GM12878 (cell line): ENCODE measurements at regions of chr6 and their contacts with region 1.

Region 1: DNA sequence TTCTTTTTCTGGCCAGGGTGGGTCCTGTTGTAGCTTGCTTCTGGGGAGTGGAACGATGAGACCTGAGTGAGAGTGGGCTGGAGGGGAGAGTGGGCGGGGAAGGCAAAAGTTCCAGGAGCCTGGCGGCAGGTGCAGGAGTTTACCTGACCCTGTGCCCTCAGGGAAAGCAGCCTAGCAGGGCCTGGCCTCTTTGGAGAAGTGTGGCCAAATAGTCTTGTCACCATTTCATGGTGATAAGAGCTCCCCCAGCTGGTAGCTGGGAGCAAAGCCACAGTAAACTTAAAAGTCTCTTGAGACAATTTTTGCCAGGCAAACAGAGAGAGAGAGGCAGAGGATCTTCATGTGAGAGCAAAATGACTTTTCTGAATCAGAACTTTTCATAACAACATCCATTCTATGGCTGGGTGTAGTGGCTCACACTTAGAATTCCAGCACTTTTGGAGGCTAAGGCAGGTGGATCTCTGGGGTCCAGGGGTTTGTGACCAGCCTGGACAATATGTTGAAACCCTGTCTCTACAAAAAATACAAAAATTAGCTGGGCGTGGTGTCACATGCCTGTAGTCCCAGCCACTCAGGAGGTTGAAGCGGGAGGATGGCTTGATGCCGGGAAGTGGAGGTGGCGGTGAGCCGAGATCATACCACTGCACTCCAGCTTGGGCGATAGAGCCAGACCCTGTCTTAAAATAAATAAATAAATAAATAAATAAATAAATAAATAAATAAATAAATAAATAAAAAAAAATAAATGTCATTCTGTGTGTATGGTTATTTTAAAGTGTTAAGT is 161.8 kb upstream of the SCGN start:
- DNase-seq: peak; percentile 42
- ATAC-seq: peak; percentile 99
- H3K4me3 ChIP-seq: no peak overlapping the region
- H3K27ac ChIP-seq: no peak overlapping the region; the same call in 1 of the 2 replicates
- H3K4me1 ChIP-seq: no peaks in the 10 kb centered on the region
- H3K27me3 ChIP-seq: no peaks in the 10 kb centered on the region
- CTCF ChIP-seq: peak; percentile 84 to 89 (median 88)
- EP300 ChIP-seq: no peak
- POLR2A ChIP-seq: no peak
- RAD21 ChIP-seq: peak; percentile 97

Region 2: GRCh38 chr6:25205629-25206028 is 284.6 kb before region 1 on chr6:
- CTCF ChIA-PET with region 1: no interaction called
- POLR2A ChIA-PET with region 1: no interaction called
- RAD21 ChIA-PET with region 1: no interaction called
- SMC1A ChIA-PET with region 1: no interaction called
- in situ Hi-C with region 1: no loop called
- intact Hi-C with region 1: no loop called
- DNase-seq: no peak
- ATAC-seq: no peak
- H3K4me3 ChIP-seq: no peak overlapping the region
- H3K27ac ChIP-seq: no peak overlapping the region
- H3K4me1 ChIP-seq: no peaks in the 10 kb centered on the region
- H3K27me3 ChIP-seq: no peaks in the 10 kb centered on the region; a peak in 1 of 4 replicates
- CTCF ChIP-seq: no peak
- EP300 ChIP-seq: no peak
- POLR2A ChIP-seq: no peak
- RAD21 ChIP-seq: no peak

Region 3: DNA sequence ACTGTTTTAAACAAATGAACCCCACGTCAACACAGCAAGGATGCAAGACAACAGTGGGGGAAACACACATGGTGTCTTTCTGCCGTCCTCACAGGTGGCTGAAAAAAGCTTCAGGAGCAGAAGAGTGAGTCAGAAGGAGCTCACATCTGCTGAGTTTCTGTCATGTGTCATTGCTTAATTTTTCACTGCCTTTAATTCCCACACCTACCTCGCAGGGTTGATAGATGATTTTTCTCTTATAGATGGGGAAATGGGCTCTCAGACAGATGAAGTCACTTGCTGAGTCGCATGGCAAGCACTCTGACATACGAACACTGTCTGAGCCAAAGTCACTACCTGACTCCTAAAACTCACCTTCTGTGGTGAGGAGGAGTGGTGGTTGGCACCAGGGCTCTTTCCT is 239.3 kb before region 1 on chr6:
- CTCF ChIA-PET with region 1: interaction called, 10 read pairs
- POLR2A ChIA-PET with region 1: no interaction called
- RAD21 ChIA-PET with region 1: no interaction called
- SMC1A ChIA-PET with region 1: interaction called, 4 read pairs
- in situ Hi-C with region 1: no loop called
- intact Hi-C with region 1: no loop called
- DNase-seq: peak; percentile 38
- ATAC-seq: peak; percentile 74
- H3K4me3 ChIP-seq: no peak overlapping the region
- H3K27ac ChIP-seq: no peak overlapping the region
- H3K4me1 ChIP-seq: no peaks in the 10 kb centered on the region
- H3K27me3 ChIP-seq: no peaks in the 10 kb centered on the region
- CTCF ChIP-seq: no peak
- EP300 ChIP-seq: no peak
- POLR2A ChIP-seq: no peak
- RAD21 ChIP-seq: no peak

Region 4: GRCh38 chr6:25278914-25279747 is 211.1 kb before region 1 on chr6 and contains the start of gene CARMIL1:
- CTCF ChIA-PET with region 1: interaction called, 362 read pairs
- POLR2A ChIA-PET with region 1: interaction called, 9 read pairs
- RAD21 ChIA-PET with region 1: interaction called, 219 read pairs
- SMC1A ChIA-PET with region 1: interaction called, 105 read pairs
- in situ Hi-C with region 1: loop called (anchors 5 kb)
- intact Hi-C with region 1: loop called (anchors 1 kb)
- DNase-seq: no peak
- ATAC-seq: peak; percentile 88
- H3K4me3 ChIP-seq: peak within 1 kb of the TSS; percentile 92
- H3K27ac ChIP-seq: peak within 1 kb of the TSS; percentile 50
- H3K4me1 ChIP-seq: 0 out of 2 replicates have a peak, but pooled peaks cover 5% of the 10 kb centered on the region
- H3K27me3 ChIP-seq: no peaks in the 10 kb centered on the region
- CTCF ChIP-seq: peak; percentile 64 to 81 (median 75)
- EP300 ChIP-seq: no peak
- POLR2A ChIP-seq: no peak
- RAD21 ChIP-seq: peak; percentile 79
- polyA plus RNA-seq, gene CARMIL1: 9.4 to 11.3 TPM

Region 5: GRCh38 chr6:25342802-25343201 is 147.4 kb before region 1 on chr6:
- CTCF ChIA-PET with region 1: interaction called, 8 read pairs
- POLR2A ChIA-PET with region 1: interaction called, 3 read pairs
- RAD21 ChIA-PET with region 1: interaction called, 11 read pairs
- SMC1A ChIA-PET with region 1: interaction called, 5 read pairs
- in situ Hi-C with region 1: no loop called
- intact Hi-C with region 1: no loop called
- DNase-seq: no peak
- ATAC-seq: no peak
- H3K4me3 ChIP-seq: no peak overlapping the region
- H3K27ac ChIP-seq: no peak overlapping the region
- H3K4me1 ChIP-seq: peaks cover 9% of the 10 kb centered on the region
- H3K27me3 ChIP-seq: 0 out of 4 replicates have a peak, but pooled peaks cover 0 to 2% of the 10 kb centered on the region in 2 experiments
- CTCF ChIP-seq: no peak
- EP300 ChIP-seq: no peak
- POLR2A ChIP-seq: no peak
- RAD21 ChIP-seq: no peak

Region 6: DNA sequence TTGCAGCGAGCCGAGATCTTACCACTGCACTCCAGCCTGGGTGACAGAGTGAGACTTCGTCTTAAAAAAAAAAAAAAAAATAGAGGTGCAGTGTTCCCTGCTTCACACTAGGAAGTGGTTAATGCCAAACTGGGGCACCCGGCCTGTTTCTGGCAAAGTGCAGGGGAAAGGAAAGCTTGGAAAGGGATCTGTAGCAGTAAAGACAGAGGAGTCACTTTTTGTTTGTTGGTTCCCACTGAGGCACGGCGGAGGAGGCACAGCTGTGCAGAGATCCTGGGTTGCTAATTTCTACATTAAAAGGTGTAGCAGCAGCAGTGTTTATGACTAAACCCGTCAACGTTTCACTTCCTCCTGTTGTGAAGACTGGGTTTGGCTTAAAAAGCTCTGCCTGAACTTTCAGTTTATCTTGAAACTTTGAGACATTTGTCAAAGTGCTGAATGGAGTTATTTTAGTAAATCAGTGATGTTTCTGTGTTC is 85.5 kb before region 1 on chr6:
- CTCF ChIA-PET with region 1: interaction called, 14 read pairs
- POLR2A ChIA-PET with region 1: no interaction called
- RAD21 ChIA-PET with region 1: interaction called, 19 read pairs
- SMC1A ChIA-PET with region 1: interaction called, 13 read pairs
- in situ Hi-C with region 1: no loop called
- intact Hi-C with region 1: no loop called
- DNase-seq: peak; percentile 90
- ATAC-seq: peak; percentile 95
- H3K4me3 ChIP-seq: peak overlapping the region; percentile 46; the same call in 1 of the 2 replicates
- H3K27ac ChIP-seq: peak overlapping the region; percentile 76
- H3K4me1 ChIP-seq: peaks cover 27% of the 10 kb centered on the region
- H3K27me3 ChIP-seq: no peaks in the 10 kb centered on the region
- CTCF ChIP-seq: no peak
- EP300 ChIP-seq: peak; percentile 76 to 86; a peak in 3 of 4 replicates
- POLR2A ChIP-seq: 0 out of 2 replicates have a peak, but pooled peaks have one; percentile 42
- RAD21 ChIP-seq: no peak

Region 7: GRCh38 chr6:25447570-25447929 is 42.7 kb before region 1 on chr6:
- CTCF ChIA-PET with region 1: interaction called, 12 read pairs
- POLR2A ChIA-PET with region 1: no interaction called
- RAD21 ChIA-PET with region 1: no interaction called
- SMC1A ChIA-PET with region 1: interaction called, 3 read pairs
- in situ Hi-C with region 1: no loop called
- intact Hi-C with region 1: no loop called
- DNase-seq: no peak
- ATAC-seq: peak; percentile 61
- H3K4me3 ChIP-seq: no peak overlapping the region
- H3K27ac ChIP-seq: no peak overlapping the region
- H3K4me1 ChIP-seq: no peaks in the 10 kb centered on the region; the same call in 1 of the 2 replicates
- H3K27me3 ChIP-seq: no peaks in the 10 kb centered on the region
- CTCF ChIP-seq: no peak
- EP300 ChIP-seq: no peak
- POLR2A ChIP-seq: no peak
- RAD21 ChIP-seq: no peak

Region 8: GRCh38 chr6:25519856-25520255 is 29.6 kb after region 1 on chr6:
- CTCF ChIA-PET with region 1: interaction called, 16 read pairs
- POLR2A ChIA-PET with region 1: no interaction called
- RAD21 ChIA-PET with region 1: no interaction called
- SMC1A ChIA-PET with region 1: interaction called, 9 read pairs
- in situ Hi-C with region 1: no loop called
- intact Hi-C with region 1: no loop called
- DNase-seq: no peak
- ATAC-seq: no peak
- H3K4me3 ChIP-seq: no peak overlapping the region
- H3K27ac ChIP-seq: no peak overlapping the region
- H3K4me1 ChIP-seq: no peaks in the 10 kb centered on the region
- H3K27me3 ChIP-seq: no peaks in the 10 kb centered on the region
- CTCF ChIP-seq: no peak
- EP300 ChIP-seq: no peak
- POLR2A ChIP-seq: no peak
- RAD21 ChIP-seq: no peak